Activated CD4-positive, alpha-beta memory T cell treated with anti-CD3 and anti-CD28 coated beads for 36 hours (primary cell): ENCODE measurements at regions of chr10 and their contacts with region 1.

Region 1: GRCh38 chr10:71383972-71384687 is 12.6 kb upstream of the CDH23 start:
- DNase-seq: peak; percentile 81
- H3K4me3 Mint-ChIP-seq: no peak overlapping the region
- H3K27ac Mint-ChIP-seq: no peak overlapping the region
- H3K4me1 Mint-ChIP-seq: no peaks in the 10 kb centered on the region
- H3K27me3 Mint-ChIP-seq: peaks cover 1% of the 10 kb centered on the region

Region 2: GRCh38 chr10:71367271-71367670 is 16.9 kb before region 1 on chr10:
- CTCF ChIA-PET with region 1: interaction called, 10 read pairs
- POLR2A ChIA-PET with region 1: no interaction called
- intact Hi-C with region 1: no loop called
- DNase-seq: no peak
- H3K4me3 Mint-ChIP-seq: no peak overlapping the region
- H3K27ac Mint-ChIP-seq: no peak overlapping the region
- H3K4me1 Mint-ChIP-seq: peaks cover 3% of the 10 kb centered on the region
- H3K27me3 Mint-ChIP-seq: peaks cover 3% of the 10 kb centered on the region

Region 3: DNA sequence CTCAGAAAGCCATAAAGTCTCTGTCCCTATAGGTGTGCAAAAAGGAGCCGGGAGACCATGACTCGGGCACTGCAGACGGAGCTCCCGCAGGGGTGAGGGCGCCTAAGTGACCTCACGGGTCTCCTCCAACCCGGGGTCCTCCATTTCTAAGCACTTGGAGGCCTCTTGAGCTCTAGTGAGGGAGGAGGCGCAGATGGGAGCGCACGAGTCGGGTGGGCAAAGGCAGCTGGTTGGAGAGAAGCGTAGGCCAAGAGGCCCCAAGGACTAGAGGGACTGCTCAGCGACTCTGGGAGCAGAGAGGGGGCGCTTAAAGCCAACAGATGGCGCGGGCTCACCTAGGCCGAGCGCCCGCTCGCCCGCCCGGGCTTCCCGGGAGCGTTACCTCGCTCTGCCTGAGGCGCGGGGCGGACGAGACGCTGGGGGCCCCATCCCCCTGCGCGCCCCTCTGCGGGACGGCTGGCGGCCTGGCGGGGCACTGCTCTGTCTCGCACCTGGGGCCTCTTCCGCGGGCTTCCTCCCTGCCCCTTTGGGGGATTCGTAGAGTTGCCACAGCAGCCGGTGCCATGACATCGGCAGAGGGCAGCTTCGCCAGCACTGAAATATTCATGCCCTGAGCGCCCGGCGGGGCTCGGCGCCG is 12.1 kb after region 1 on chr10:
- CTCF ChIA-PET with region 1: interaction called, 22 read pairs
- POLR2A ChIA-PET with region 1: no interaction called
- intact Hi-C with region 1: no loop called
- DNase-seq: peak; percentile 50
- H3K4me3 Mint-ChIP-seq: no peak overlapping the region
- H3K27ac Mint-ChIP-seq: no peak overlapping the region
- H3K4me1 Mint-ChIP-seq: peaks cover 7% of the 10 kb centered on the region
- H3K27me3 Mint-ChIP-seq: peaks cover 51% of the 10 kb centered on the region

Region 4: GRCh38 chr10:71608819-71609768 is 225.0 kb after region 1 on chr10:
- CTCF ChIA-PET with region 1: interaction called, 4 read pairs
- POLR2A ChIA-PET with region 1: no interaction called
- intact Hi-C with region 1: loop called (anchors 2 kb)
- DNase-seq: peak; percentile 78
- H3K4me3 Mint-ChIP-seq: no peak overlapping the region
- H3K27ac Mint-ChIP-seq: no peak overlapping the region
- H3K4me1 Mint-ChIP-seq: no peaks in the 10 kb centered on the region
- H3K27me3 Mint-ChIP-seq: peaks cover 1% of the 10 kb centered on the region

Region 5: DNA sequence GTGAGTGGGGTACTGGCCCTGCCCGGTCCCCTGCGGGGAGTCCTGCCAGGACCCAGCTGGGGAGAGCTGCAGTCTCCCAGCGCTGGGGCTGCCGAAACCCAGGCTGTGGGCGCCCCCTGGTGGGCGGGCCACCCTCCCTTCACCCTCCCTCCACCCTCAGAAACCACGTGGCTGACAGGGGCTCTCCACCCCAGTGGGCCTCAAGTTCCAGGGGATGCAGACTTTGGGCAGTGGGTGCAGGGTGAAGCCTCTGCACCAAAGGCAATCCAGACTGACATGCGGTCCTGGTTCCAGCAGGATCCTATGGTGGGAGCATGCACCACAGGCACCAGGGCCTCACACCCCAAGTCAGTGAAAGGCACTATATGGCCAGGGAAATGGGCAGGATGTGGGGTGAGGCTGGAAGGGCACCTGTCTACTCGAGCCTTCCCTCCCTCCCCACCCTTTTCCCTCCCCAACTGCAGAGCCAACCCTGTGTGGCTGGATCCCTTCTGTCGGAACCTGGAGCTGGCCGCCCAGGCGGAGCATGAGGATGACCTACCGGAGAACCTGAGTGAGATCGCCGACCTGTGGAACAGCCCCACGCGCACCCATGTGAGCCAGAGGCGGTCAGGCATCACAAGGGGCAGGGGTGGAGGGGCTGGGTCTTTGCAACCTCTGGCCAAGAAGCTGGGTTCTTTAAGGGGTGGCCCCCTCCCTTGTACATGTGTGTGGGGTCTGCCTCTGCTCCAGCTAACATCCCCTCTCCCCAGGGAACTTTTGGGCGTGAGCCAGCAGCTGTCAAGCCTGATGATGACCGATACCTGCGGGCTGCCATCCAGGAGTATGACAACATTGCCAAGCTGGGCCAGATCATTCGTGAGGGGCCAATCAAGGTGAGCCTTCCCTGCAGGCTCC is 428.1 kb after region 1 on chr10:
- CTCF ChIA-PET with region 1: interaction called, 11 read pairs
- POLR2A ChIA-PET with region 1: no interaction called
- intact Hi-C with region 1: loop called (anchors 5 kb)
- DNase-seq: peak; percentile 83
- H3K4me3 Mint-ChIP-seq: no peak overlapping the region
- H3K27ac Mint-ChIP-seq: no peak overlapping the region
- H3K4me1 Mint-ChIP-seq: no peaks in the 10 kb centered on the region
- H3K27me3 Mint-ChIP-seq: no peaks in the 10 kb centered on the region